Right ventricle myocardium inferior (tissue), 1 donor: ENCODE measurements at regions of chr6 and their contacts with region 1.

Region 1: GRCh38 chr6:105363100-105363754 is 39.7 kb downstream of the PREP start:
- DNase-seq: no peak
- ATAC-seq: no peak

Region 2: GRCh38 chr6:105136431-105137350 is 226.5 kb before region 1 on chr6:
- intact Hi-C with region 1: loop called (anchors 5 kb)
- DNase-seq: peak; percentile 78
- ATAC-seq: peak; percentile 85

Region 3: GRCh38 chr6:105282631-105283585 is 80.3 kb before region 1 on chr6:
- intact Hi-C with region 1: no loop called
- DNase-seq: no peak
- ATAC-seq: no peak

Region 4: GRCh38 chr6:105484238-105485161 is 121.3 kb after region 1 on chr6:
- intact Hi-C with region 1: no loop called
- DNase-seq: no peak
- ATAC-seq: no peak

Region 5: GRCh38 chr6:105573138-105573537 is 209.9 kb after region 1 on chr6:
- intact Hi-C with region 1: no loop called
- DNase-seq: no peak
- ATAC-seq: no peak